A673 (cell line): ENCODE measurements at regions of chr18 and their contacts with region 1.

Region 1: GRCh38 chr18:62551972-62552507 is 29.2 kb downstream of the ZCCHC2 start:
- DNase-seq: no peak
- H3K4me3 ChIP-seq: no peak overlapping the region
- H3K27ac ChIP-seq: no peak overlapping the region
- H3K4me1 ChIP-seq: no peaks in the 10 kb centered on the region
- H3K27me3 ChIP-seq: no peaks in the 10 kb centered on the region
- CTCF ChIP-seq: no peak

Region 2: DNA sequence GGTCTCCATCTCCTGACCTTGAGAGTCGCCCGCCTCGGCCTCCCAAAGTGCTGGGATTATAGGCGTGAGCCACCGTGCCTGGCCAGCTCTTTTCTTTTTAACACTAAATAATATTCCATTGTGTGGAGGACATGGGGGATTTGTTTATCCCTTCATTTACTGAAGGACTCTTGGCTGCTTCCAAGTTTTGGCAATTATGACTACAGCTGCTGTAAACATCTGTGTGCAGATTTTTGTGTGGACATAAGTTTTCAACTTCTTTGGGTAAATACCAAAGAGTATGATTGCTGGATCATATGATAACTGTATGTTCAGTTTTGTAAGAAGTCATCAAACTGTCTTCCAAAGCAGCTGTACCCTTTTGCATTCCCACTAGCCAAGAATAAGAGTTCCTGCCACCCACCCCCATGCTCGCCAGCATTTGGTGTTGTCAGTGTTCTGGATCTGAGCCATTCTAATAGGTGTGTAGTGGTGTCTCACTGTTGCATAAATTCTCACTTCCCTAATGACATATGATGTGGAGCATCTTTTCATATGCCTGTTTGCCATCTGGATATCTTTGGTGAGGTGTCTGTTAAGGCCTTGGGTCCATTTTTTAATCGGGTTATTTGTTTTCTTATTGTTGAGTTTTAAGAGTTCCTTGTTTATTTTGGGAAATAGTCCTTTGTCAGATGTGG is 174.8 kb before region 1 on chr18:
- CTCF ChIA-PET with region 1: no interaction called
- POLR2A ChIA-PET with region 1: interaction called, 11 read pairs
- intact Hi-C with region 1: no loop called
- DNase-seq: no peak
- H3K4me3 ChIP-seq: no peak overlapping the region
- H3K27ac ChIP-seq: no peak overlapping the region
- H3K4me1 ChIP-seq: no peaks in the 10 kb centered on the region
- H3K27me3 ChIP-seq: no peaks in the 10 kb centered on the region
- CTCF ChIP-seq: no peak